PC-9 (cell line): ENCODE measurements at regions of chr10 and their contacts with region 1.

Region 1: GRCh38 chr10:132637477-132638129 is 100.0 kb downstream of the INPP5A start:
- DNase-seq: peak in 1 of 2 experiments; percentile 11
- H3K4me3 ChIP-seq: no peak overlapping the region
- H3K27ac ChIP-seq: no peak overlapping the region
- H3K4me1 ChIP-seq: no peaks in the 10 kb centered on the region
- H3K27me3 ChIP-seq: no peaks in the 10 kb centered on the region
- CTCF ChIP-seq: peak; percentile 71

Region 2: DNA sequence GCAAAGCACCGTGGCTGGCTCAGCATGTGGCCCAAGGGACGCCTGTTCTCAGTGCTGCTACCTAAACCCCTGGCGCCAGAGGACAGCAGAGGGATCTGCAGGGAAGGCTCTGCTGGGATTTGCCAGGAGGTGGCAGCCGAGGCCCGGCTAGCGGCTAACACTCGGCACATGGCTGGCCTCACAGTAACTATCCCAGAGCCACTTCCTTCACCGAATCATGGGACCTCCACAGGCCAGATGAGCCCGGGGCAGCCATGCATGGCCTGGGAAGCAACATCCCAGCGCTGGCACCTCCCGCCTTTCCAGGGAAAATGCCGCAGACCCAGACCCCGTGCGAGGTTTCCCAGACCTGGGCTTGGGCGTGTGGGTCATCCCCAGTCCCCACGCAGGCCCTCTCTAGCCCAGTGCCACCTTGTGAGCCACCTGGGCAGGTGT is 414.4 kb before region 1 on chr10:
- CTCF ChIA-PET with region 1: no interaction called
- POLR2A ChIA-PET with region 1: no interaction called
- intact Hi-C with region 1: loop called (anchors 1 kb)
- DNase-seq: peak; percentile 58 to 75
- H3K4me3 ChIP-seq: no peak overlapping the region
- H3K27ac ChIP-seq: no peak overlapping the region
- H3K4me1 ChIP-seq: no peaks in the 10 kb centered on the region
- H3K27me3 ChIP-seq: no peaks in the 10 kb centered on the region
- CTCF ChIP-seq: peak; percentile 84

Region 3: GRCh38 chr10:132387764-132388210 is 249.8 kb before region 1 on chr10:
- CTCF ChIA-PET with region 1: no interaction called
- POLR2A ChIA-PET with region 1: no interaction called
- intact Hi-C with region 1: loop called (anchors 10 kb)
- DNase-seq: peak in 1 of 2 experiments; percentile 64
- H3K4me3 ChIP-seq: no peak overlapping the region
- H3K27ac ChIP-seq: no peak overlapping the region
- H3K4me1 ChIP-seq: peaks cover under 1% of the 10 kb centered on the region
- H3K27me3 ChIP-seq: no peaks in the 10 kb centered on the region
- CTCF ChIP-seq: peak; percentile 61

Region 4: GRCh38 chr10:132458593-132459300 is 178.9 kb before region 1 on chr10:
- CTCF ChIA-PET with region 1: no interaction called
- POLR2A ChIA-PET with region 1: no interaction called
- intact Hi-C with region 1: loop called (anchors 1 kb)
- DNase-seq: peak in 1 of 2 experiments; percentile 48
- H3K4me3 ChIP-seq: no peak overlapping the region
- H3K27ac ChIP-seq: no peak overlapping the region
- H3K4me1 ChIP-seq: no peaks in the 10 kb centered on the region
- H3K27me3 ChIP-seq: no peaks in the 10 kb centered on the region
- CTCF ChIP-seq: peak; percentile 90

Region 5: DNA sequence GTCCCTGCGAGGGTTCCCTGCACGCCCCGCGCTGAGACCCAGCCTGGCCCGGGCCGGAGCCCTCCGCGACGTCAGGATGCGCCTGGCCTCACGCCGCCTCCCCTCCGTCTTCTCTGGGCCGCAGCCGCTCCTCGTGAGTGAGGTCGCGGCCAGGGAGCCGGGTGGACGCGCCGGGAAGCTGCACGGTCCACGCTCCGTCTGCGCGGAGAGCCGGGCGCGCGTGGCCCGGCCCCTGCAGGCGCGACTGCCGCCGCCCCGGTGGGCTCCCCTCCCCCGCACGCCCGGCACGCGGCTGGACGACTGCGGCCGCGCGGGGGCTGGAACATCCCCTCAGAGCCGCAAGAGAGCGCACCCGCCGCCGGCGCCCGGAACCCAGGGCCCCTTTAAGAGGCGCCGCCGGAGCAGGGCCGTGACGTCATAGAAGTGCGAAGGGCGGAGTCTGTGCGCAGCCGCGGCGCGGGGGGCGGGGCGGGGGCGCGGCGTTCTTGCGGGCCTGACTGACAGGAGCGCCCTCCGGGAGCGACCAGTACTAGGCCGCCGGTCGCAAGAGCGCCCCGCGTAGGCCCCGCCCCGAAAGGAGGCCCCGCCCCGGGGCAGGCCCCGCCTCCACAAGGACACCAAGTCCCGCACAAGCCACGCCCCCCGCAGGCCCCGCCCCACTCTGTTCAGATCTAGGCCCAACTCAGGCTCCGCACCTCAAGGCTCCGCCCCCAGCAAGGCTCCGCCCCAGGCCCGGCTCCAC is 100.5 kb before region 1 on chr10:
- CTCF ChIA-PET with region 1: no interaction called
- POLR2A ChIA-PET with region 1: no interaction called
- intact Hi-C with region 1: loop called (anchors 2 kb)
- DNase-seq: peak; percentile 91 to 99
- H3K4me3 ChIP-seq: peak overlapping the region; percentile 72
- H3K27ac ChIP-seq: no peak overlapping the region
- H3K4me1 ChIP-seq: peaks cover 39% of the 10 kb centered on the region
- H3K27me3 ChIP-seq: no peaks in the 10 kb centered on the region
- CTCF ChIP-seq: no peak

Region 6: DNA sequence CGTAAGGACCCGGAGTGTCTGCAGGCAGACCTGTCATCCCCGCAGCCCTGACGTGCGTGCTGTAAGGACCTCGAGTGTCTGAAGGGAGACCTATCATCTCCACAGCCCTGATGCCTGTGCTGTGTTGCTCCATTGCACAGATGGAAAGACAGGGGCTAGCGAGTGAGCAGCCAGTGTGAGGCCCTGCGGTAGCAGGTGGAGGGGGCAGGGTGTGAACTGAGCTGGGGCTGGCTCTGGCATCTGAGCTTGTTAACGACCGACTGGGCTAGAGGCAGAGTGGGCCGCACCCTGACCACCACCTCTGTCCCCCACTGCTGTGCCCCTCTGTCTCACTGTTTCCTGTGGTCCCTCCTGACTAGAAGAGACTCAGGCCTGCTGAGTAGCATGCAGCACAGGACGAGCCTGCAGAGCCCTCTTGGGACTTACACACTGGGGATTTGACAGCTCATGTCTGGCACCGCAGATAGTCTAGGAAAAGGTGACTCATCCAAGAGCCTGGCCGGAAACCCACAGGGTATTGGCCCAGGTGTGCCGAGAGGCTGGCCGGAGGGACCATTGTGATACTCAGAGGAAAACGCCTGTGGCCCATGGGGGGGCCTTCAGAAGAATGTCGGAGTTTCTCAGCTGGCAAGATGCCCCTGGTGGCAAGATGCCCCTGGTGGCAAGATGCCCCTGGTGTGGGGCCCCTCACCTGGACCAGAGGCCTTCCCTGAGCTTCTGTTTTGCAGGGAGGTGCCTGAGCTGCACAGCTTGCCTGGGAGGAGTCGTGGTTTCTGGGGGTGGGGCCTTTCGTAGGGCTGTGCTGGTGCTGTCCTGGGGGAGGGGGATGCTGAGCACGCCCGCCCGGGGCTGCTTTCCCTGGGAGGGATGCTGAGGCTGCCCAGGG is 65.7 kb before region 1 on chr10:
- CTCF ChIA-PET with region 1: no interaction called
- POLR2A ChIA-PET with region 1: no interaction called
- intact Hi-C with region 1: loop called (anchors 10 kb)
- DNase-seq: peak; percentile 85 to 90
- H3K4me3 ChIP-seq: no peak overlapping the region; the same call in 1 of the 2 replicates
- H3K27ac ChIP-seq: peak overlapping the region; percentile 55
- H3K4me1 ChIP-seq: peaks cover 55% of the 10 kb centered on the region
- H3K27me3 ChIP-seq: no peaks in the 10 kb centered on the region
- CTCF ChIP-seq: no peak

Region 7: GRCh38 chr10:132593389-132593788 is 44.2 kb before region 1 on chr10:
- CTCF ChIA-PET with region 1: no interaction called
- POLR2A ChIA-PET with region 1: no interaction called
- intact Hi-C with region 1: loop called (anchors 5 kb)
- DNase-seq: no peak
- H3K4me3 ChIP-seq: no peak overlapping the region
- H3K27ac ChIP-seq: no peak overlapping the region
- H3K4me1 ChIP-seq: peaks cover 26% of the 10 kb centered on the region
- H3K27me3 ChIP-seq: no peaks in the 10 kb centered on the region
- CTCF ChIP-seq: no peak